GM23248 (cell line): ENCODE measurements at regions of chr11 and their contacts with region 1.

Region 1: DNA sequence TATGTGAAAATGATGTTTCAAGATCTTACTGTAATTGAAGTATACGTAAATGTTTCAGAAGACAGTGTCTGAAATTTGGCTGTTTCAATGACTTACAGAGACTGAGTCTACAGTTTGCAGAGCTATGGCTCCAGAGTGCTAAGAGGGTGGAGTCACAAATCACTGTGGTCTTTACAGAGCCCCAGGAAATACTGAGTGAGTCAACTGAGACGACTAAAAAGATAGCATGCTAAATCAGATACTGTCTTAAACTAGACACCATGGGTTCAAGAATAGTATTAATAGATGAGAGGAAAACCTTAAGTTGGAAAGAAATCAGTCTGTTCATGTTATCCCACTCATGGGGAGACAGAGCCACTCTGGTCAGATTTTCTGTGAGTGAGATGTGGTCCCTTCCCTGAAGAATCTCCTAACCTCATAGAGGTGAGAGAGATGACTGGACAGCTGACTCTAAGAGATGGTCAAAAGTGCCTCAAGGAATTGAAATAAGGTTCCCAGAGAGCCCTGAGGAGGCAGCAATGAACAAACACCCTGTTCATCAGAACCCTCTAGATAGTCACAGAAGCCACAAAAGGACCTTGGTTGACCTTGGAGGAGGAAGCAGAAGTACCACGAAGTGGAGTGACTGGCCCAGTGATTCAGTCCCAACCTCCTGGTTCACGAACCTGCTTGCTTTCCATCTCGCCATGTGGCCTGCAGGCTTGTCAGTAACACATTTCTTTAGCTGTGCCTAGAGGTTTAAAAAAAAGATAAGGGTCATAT is 30.2 kb downstream of the C11orf91 start:
- DNase-seq: peak; percentile 88
- H3K4me3 ChIP-seq: 0 out of 2 replicates have a peak overlapping the region, but pooled peaks have one; percentile 23
- H3K27ac ChIP-seq: peak overlapping the region; percentile 90
- H3K4me1 ChIP-seq: peaks cover 53% of the 10 kb centered on the region
- H3K27me3 ChIP-seq: no peaks in the 10 kb centered on the region

Region 2: DNA sequence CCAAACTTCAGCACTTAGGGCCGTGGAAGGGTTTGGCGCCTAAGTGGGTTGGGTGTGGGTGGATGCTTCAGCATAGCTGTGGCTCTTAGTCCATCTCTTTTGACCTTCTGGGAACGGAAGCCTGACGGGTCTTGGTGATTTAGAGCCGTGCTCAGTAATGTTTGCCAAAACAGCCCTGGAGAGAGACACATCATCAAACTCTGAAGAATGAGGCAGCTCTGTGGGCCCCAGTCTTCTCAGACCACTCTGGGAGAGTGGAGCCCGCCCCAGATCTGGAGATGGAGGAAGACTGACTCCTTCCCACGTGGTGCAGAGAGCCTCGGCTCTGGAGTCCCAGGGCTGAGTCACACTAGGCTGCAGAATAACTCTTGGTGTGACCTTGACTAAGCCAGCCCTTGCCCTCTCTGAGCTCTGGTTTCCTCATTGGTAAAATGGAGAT is 138.7 kb before region 1 on chr11:
- in situ Hi-C with region 1: no loop called
- DNase-seq: peak; percentile 99
- H3K4me3 ChIP-seq: peak overlapping the region; percentile 24; the same call in 1 of the 2 replicates
- H3K27ac ChIP-seq: peak overlapping the region; percentile 87
- H3K4me1 ChIP-seq: peaks cover 42% of the 10 kb centered on the region
- H3K27me3 ChIP-seq: no peaks in the 10 kb centered on the region

Region 3: DNA sequence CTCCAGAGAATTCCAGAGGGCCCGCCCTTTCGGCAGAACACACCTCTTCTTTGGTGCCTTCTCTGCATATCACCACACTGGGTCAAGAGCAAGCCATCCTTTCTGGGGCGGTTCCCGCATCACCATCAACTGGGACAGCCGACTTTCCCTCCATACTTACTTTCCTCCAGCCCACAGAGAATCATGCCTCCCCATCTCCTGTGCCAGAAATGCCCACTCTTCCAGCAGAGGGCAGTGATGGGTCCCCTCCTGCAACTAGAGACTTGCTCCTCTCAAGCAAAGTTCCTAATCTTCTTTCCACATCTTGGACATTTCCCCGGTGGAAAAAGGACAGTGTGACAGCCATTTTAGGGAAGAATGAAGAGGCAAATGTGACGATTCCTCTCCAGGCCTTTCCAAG is 127.5 kb before region 1 on chr11:
- in situ Hi-C with region 1: loop called (anchors 10 kb)
- DNase-seq: peak; percentile 49
- H3K4me3 ChIP-seq: no peak overlapping the region
- H3K27ac ChIP-seq: no peak overlapping the region
- H3K4me1 ChIP-seq: peaks cover 52% of the 10 kb centered on the region
- H3K27me3 ChIP-seq: no peaks in the 10 kb centered on the region